AG04449 (cell line): ENCODE measurements at regions of chr21 and their contacts with region 1.

Region 1: DNA sequence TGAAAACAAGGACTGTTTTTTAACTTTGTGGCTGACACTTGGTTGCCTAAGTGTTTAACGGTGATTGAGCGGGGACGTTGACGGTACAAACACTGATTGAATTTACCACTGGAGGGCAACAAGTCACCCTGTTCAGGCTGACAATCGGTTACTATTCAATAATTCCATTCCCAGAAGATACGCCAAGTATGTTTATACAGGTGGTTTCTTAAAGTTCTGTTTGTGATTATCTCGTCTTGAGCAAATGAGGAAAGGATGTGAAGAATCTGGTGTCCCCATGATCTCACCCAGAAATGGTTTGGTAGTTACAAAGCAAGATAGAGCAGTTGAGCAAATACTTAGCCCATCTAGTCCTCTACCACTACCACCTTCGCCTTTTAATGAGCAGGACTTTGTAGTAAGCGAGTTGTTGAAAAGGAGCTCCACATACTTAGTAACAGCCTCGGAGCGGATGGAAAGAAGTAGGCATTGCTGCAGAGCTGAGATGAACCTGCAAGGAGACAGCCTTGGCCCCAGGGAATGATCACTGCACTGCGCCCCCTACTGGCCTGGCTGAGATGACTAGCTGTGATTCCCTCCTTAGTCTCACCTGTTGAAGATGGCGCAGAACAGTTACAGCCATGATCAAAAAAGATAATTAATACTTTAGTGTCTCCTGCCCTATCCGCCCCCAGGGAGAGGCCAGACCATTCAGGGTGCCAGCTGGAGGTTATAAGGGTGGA is 36.3 kb downstream of the IFNAR1 start:
- DNase-seq: peak; percentile 73
- H3K4me3 ChIP-seq: no peak overlapping the region
- CTCF ChIP-seq: peak; percentile 89

Region 2: GRCh38 chr21:33324291-33325221 is 36.5 kb before region 1 on chr21 and contains the start of gene IFNAR1:
- CTCF ChIA-PET with region 1: interaction called, 16 read pairs
- POLR2A ChIA-PET with region 1: no interaction called
- DNase-seq: peak; percentile 76
- H3K4me3 ChIP-seq: peak within 1 kb of the TSS; percentile 100
- CTCF ChIP-seq: no peak

Region 3: GRCh38 chr21:33339918-33340317 is 21.1 kb before region 1 on chr21:
- CTCF ChIA-PET with region 1: interaction called, 80 read pairs
- POLR2A ChIA-PET with region 1: no interaction called
- DNase-seq: no peak
- H3K4me3 ChIP-seq: no peak overlapping the region
- CTCF ChIP-seq: no peak

Region 4: GRCh38 chr21:33374450-33375096 is 13.5 kb after region 1 on chr21:
- CTCF ChIA-PET with region 1: interaction called, 64 read pairs
- POLR2A ChIA-PET with region 1: no interaction called
- DNase-seq: no peak
- H3K4me3 ChIP-seq: no peak overlapping the region
- CTCF ChIP-seq: peak; percentile 57

Region 5: GRCh38 chr21:33386222-33386784 is 25.3 kb after region 1 on chr21:
- CTCF ChIA-PET with region 1: interaction called, 64 read pairs
- POLR2A ChIA-PET with region 1: no interaction called
- DNase-seq: no peak
- H3K4me3 ChIP-seq: no peak overlapping the region
- CTCF ChIP-seq: no peak

Region 6: DNA sequence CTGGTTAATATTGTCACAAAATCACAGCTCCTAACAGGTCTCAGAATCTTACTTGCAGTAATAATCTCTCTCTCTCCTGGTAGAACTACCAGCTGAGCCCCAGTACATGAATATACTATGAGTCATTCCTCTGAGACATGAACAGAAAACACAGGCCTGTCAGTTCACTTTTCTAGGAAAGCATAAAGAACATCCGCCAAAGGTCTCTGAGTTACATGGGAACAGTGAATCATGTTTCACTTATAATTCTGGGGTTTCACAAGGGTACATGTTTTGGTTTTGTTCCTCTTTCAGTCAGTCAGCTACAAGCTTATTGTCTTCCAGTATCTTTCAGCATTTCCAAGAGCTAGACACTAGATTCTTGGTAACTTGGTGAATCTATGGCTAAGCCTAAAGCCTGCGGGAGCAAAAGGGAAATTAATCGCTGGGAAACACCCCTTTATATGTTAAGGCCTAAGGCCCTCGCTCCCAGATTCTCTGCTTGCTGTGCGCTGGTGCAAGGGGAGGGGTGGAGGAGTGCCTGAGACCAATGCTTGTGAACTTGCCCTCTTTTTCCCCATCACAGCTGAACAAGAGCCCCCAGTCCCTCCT is 73.8 kb after region 1 on chr21:
- CTCF ChIA-PET with region 1: interaction called, 86 read pairs
- POLR2A ChIA-PET with region 1: no interaction called
- DNase-seq: peak; percentile 79
- H3K4me3 ChIP-seq: no peak overlapping the region
- CTCF ChIP-seq: no peak